Right ventricle myocardium inferior (tissue), 1 donor: ENCODE measurements at regions of chr7 and their contacts with region 1.

Region 1: GRCh38 chr7:24979863-24980533 is at the start of gene OSBPL3:
- DNase-seq: peak; percentile 97
- ATAC-seq: peak; percentile 98
- total RNA-seq, gene OSBPL3: 8.5 TPM

Region 2: DNA sequence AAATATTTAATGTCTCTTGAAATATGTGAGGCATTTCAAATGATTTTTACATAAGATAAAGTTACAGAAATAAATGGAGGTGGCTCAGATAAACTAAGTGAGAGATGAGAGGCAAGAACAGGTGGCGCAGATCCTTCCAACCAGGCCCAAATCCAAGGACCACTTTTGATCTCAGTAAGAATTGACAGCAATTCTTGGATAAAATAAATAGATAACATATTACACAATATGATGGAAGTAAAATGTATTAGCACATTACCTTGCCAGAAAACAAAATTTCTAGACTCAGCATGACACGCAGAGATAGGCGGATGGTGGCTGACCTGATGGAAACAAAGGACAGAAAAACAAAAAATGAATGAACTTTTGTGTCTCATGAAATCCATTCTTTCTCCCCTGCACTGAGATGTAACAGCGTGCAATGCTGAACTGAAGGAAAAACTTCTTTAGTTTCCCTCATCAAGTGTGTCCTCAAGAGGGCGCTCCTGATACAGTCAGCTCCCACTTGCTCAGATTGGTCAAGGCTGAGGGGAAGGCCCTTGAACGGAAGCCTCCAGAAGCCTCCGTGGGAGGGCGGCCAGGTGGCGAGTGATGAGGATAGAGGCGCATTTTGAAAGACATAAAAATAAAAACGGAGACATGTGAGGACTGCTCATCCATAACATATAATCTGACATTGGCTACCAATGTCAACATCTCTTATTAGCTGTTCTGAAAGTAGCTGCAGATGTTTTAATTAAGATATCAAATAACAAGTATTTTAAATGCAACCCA is 159.9 kb before region 1 on chr7:
- intact Hi-C with region 1: loop called (anchors 2 kb)
- DNase-seq: peak; percentile 81
- ATAC-seq: peak; percentile 90

Region 3: DNA sequence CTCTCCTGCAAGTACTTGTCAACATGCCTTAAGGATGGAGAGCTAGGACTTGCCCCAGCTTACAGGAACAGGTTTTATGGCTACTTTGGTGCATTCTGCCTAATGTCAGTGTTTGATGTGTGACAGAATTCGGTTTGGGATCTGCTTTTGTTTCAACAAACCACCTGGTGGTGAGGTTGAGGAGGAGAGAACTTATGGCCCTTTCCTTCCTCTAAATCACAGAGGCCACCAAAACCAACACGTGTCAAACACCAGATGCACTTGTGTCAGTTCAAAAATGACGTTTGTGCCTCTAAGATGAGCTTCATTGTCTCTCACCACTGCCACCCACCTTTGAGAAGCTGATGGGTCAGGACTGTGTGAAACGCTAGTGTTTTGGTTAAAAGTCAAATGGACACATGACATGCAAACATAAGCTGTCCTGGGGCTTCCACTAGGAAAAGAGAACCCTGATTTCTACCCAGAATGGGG is 83.9 kb before region 1 on chr7:
- intact Hi-C with region 1: loop called (anchors 2 kb)
- DNase-seq: no peak
- ATAC-seq: no peak

Region 4: GRCh38 chr7:24926623-24927524 is 53.1 kb before region 1 on chr7:
- intact Hi-C with region 1: loop called (anchors 5 kb)
- DNase-seq: no peak
- ATAC-seq: no peak

Region 5: GRCh38 chr7:25028370-25029021 is 48.5 kb after region 1 on chr7:
- intact Hi-C with region 1: loop called (anchors 5 kb)
- DNase-seq: no peak
- ATAC-seq: no peak

Region 6: GRCh38 chr7:25069900-25070443 is 90.0 kb after region 1 on chr7:
- intact Hi-C with region 1: loop called (anchors 2 kb)
- DNase-seq: no peak
- ATAC-seq: peak; percentile 62